ENCODE measurements at regions of chr5 and their contacts with region 1.

Region 1: DNA sequence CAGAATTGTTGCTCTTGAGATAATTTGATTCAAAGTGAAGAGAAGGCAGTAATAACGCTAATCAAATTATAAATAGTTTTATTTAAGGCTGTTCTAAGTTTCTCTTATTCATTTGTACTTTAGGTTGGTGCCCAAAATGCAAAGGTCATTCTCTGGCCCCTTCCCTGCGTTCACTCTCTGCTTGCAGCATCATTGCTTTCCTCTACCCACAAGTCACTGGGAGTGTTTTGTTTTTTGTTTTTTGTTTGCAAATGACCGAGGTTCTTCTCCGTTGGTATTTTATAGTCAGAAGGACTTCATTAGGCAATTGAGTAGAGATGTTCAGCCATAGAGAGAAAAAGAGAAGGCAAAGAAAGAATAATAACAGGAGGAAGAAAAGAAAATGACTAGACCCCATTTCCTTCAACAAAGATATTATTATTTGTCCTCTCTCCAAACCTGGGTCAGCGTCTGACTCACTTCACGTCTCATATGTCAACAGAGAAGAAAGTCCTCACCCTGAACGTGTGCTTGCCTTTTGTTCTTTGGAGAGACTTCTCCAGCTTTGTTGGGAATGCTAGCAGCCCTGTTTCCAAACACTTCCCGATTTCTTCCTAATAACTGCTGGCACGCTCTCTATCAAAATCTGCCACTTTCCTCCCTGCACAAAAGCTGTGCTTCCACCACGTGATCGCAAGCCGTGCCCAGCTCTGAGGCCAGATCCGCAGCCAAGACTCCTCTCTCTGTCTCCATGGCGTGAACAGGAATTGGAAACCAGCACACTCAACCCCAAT is 119.8 kb downstream of the EBF1 start:
- DNase-seq: peak; percentile 82 to 87
- H3K4me3 ChIP-seq: peak overlapping the region; percentile 28 to 33
- H3K27ac ChIP-seq: peak overlapping the region; percentile 46 to 62
- H3K4me1 ChIP-seq: peaks cover 0 to 84% (median 39%) of the 10 kb centered on the region in 4 donors
- H3K27me3 ChIP-seq: no peaks in the 10 kb centered on the region
- CTCF ChIP-seq: no peak

Region 2: GRCh38 chr5:158880483-158881001 is 99.4 kb before region 1 on chr5:
- intact Hi-C with region 1: loop called (anchors 10 kb)
- DNase-seq: no peak
- H3K4me3 ChIP-seq: no peak overlapping the region
- H3K27ac ChIP-seq: peak overlapping the region in 1 of 2 donors; percentile 2
- H3K4me1 ChIP-seq: peaks cover 0 to 90% (median 46%) of the 10 kb centered on the region in 4 donors
- H3K27me3 ChIP-seq: no peaks in the 10 kb centered on the region
- CTCF ChIP-seq: no peak

Region 3: DNA sequence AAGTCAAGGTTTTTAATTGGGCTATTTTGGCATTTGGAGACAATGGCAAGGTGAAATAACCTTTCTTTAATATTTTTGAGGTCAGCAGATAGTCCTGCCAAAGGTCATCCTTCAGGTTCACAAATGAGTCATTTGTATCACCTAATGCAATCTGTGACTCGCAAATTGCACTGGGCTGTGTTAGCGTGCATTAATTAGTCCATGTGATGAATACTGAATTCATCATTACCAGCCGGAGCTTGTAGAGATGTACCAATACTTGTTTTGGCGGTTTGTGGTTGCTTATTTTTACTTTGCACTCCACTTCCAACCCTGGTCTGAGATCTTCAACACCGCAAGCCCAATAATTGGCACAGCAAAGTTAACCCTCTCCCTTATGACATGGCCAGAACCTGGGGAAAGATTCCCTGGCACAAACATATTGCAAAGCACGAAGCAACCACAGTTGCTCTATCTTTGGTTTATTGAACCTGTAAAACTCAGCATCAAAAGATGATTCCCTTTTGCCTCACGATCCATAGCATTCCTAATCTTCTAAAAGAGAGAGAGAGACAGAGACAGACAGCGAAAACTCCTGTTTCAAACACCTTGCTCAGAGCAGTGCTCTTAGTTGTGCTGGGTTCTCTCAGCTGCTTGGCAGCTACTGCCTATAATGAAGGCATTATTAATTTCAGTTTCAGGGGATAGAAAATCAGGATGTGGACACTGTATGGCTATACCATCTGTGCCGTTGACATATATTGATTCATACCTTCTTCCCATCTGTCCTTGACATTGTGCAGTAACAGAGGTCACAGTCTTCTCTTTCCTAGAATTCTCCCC is 58.3 kb before region 1 on chr5:
- intact Hi-C with region 1: no loop called
- DNase-seq: no peak
- H3K4me3 ChIP-seq: no peak overlapping the region
- H3K27ac ChIP-seq: no peak overlapping the region
- H3K4me1 ChIP-seq: peaks cover 0 to 18% (median 4%) of the 10 kb centered on the region in 4 donors
- H3K27me3 ChIP-seq: no peaks in the 10 kb centered on the region
- CTCF ChIP-seq: no peak

Measured in tibial artery (tissue), 4 donors.